Prostate gland (tissue), 2 donors: ENCODE measurements at regions of chr4 and their contacts with region 1.

Region 1: GRCh38 chr4:102344954-102345794 is at the start of gene SLC39A8:
- DNase-seq: peak; percentile 82
- H3K4me3 ChIP-seq: peak within 1 kb of the TSS; percentile 51 to 65
- H3K27ac ChIP-seq: peak within 1 kb of the TSS; percentile 50 to 77
- H3K4me1 ChIP-seq: no peaks in the 10 kb centered on the region
- H3K27me3 ChIP-seq: no peaks in the 10 kb centered on the region
- CTCF ChIP-seq: peak; percentile 55 to 85 (median 77)
- POLR2A ChIP-seq: peak; percentile 47
- total RNA-seq, gene SLC39A8: 11.1 to 19.2 TPM

Region 2: GRCh38 chr4:102430461-102430910 is 85.3 kb after region 1 on chr4:
- intact Hi-C with region 1: loop called (anchors 2 kb)
- DNase-seq: no peak
- H3K4me3 ChIP-seq: peak overlapping the region; percentile 42 to 43
- H3K27ac ChIP-seq: peak overlapping the region in 1 of 2 donors; percentile 70
- H3K4me1 ChIP-seq: no peaks in the 10 kb centered on the region
- H3K27me3 ChIP-seq: no peaks in the 10 kb centered on the region
- CTCF ChIP-seq: no peak
- POLR2A ChIP-seq: no peak

Region 3: GRCh38 chr4:103019308-103020124 is 674.3 kb after region 1 on chr4 and contains the start of gene SLC9B1:
- intact Hi-C with region 1: loop called (anchors 10 kb)
- DNase-seq: peak; percentile 97
- H3K4me3 ChIP-seq: peak within 1 kb of the TSS; percentile 29 to 40
- H3K27ac ChIP-seq: peak within 1 kb of the TSS; percentile 87 to 88
- H3K4me1 ChIP-seq: no peaks in the 10 kb centered on the region
- H3K27me3 ChIP-seq: no peaks in the 10 kb centered on the region
- CTCF ChIP-seq: peak in 2 of 4 experiments; percentile 8 to 26
- POLR2A ChIP-seq: peak; percentile 72
- total RNA-seq, gene SLC9B1: 9.3 TPM in 1 of 2 donors, not detected in the other